ENCODE measurements at regions of chr14 and their contacts with region 1.

Region 1: DNA sequence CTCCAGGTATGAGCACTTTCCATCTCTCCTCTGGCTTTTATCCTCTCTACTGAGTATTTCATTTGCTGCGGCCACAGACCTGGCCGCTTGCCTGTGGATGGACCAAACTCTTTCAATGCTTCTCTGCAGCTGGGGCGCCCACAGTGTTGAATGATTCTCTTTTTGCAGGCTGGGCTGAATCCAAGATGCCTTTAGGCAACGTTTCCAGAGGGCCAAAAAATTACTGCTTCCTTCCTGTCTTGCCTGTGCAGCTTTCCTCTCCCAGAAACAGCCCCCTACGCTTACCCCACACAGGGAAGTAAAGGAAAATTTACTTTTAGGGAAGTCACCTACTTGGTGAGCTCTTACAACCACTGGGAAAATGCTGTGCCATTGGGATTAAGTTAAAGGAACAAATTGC is 55.6 kb upstream of the JDP2 start:
- DNase-seq: peak; percentile 13 to 83 (median 73)
- H3K4me3 ChIP-seq: peak overlapping the region in 2 of 59 donors; percentile 10 to 17
- H3K27ac ChIP-seq: peak overlapping the region in 19 of 59 donors; percentile 0 to 58 (median 36)
- H3K27me3 ChIP-seq: no peaks in the 10 kb centered on the region
- CTCF ChIP-seq: peak in 8 of 56 donors; percentile 10 to 34 (median 14)

Region 2: GRCh38 chr14:75315144-75315543 is 57.1 kb before region 1 on chr14:
- intact Hi-C with region 1: loop called (anchors 2 kb)
- DNase-seq: no peak
- H3K4me3 ChIP-seq: no peak overlapping the region
- H3K27ac ChIP-seq: peak overlapping the region in 22 of 59 donors; percentile 1 to 63 (median 39)
- H3K27me3 ChIP-seq: no peaks in the 10 kb centered on the region
- CTCF ChIP-seq: no peak